PC-9 (cell line): ENCODE measurements at regions of chr5 and their contacts with region 1.

Region 1: DNA sequence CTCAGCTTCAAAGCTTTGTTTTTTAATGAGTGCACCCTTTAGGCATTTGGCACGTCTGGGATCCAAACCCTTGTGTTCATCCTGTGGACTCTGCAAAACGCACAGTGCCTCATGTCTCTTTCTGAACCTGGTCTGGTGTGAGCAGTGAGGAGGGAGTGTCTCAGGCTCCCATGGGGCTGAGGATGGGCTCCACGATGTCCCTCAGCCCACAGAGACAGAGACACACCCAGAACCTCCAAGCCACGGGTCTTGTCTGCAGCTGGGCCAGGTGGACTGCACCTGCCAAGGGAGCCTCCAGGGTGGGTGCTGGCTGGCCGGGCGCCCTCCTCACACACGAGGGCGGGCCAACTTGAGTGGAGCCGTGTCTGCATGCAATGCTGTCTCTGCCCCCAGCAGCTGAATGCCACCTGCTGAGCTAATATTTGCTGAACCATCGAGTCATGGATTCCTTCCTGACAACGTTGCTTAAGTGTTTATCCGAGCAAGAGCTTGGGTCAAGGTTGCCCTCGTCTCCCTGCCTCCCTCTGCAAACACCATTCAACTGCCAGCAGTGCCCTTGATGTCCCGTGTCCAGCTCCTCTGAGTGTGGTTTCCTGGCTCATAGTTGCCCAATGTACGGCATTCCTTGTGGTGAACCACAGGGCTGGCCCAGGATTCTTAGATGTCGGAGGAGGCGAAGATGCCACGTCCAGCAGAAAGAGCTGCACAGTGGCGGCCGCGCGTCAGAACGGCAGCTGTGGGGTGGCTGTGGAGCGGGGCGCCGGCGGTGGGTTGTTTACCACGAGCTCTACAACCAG is 31.4 kb upstream of the LPCAT1 start:
- DNase-seq: peak; percentile 100
- H3K4me3 ChIP-seq: peak overlapping the region; percentile 5; the same call in 1 of the 2 replicates
- H3K27ac ChIP-seq: peak overlapping the region; percentile 9
- H3K4me1 ChIP-seq: peaks cover 26% of the 10 kb centered on the region
- H3K27me3 ChIP-seq: peaks cover 25% of the 10 kb centered on the region
- CTCF ChIP-seq: 0 out of 2 replicates have a peak, but pooled peaks have one; percentile 10

Region 2: GRCh38 chr5:386432-387341 is 1168.5 kb before region 1 on chr5:
- CTCF ChIA-PET with region 1: no interaction called
- POLR2A ChIA-PET with region 1: no interaction called
- intact Hi-C with region 1: loop called (anchors 1 kb)
- DNase-seq: peak; percentile 87 to 96
- H3K4me3 ChIP-seq: no peak overlapping the region
- H3K27ac ChIP-seq: no peak overlapping the region
- H3K4me1 ChIP-seq: peaks cover 26% of the 10 kb centered on the region
- H3K27me3 ChIP-seq: no peaks in the 10 kb centered on the region
- CTCF ChIP-seq: no peak

Region 3: DNA sequence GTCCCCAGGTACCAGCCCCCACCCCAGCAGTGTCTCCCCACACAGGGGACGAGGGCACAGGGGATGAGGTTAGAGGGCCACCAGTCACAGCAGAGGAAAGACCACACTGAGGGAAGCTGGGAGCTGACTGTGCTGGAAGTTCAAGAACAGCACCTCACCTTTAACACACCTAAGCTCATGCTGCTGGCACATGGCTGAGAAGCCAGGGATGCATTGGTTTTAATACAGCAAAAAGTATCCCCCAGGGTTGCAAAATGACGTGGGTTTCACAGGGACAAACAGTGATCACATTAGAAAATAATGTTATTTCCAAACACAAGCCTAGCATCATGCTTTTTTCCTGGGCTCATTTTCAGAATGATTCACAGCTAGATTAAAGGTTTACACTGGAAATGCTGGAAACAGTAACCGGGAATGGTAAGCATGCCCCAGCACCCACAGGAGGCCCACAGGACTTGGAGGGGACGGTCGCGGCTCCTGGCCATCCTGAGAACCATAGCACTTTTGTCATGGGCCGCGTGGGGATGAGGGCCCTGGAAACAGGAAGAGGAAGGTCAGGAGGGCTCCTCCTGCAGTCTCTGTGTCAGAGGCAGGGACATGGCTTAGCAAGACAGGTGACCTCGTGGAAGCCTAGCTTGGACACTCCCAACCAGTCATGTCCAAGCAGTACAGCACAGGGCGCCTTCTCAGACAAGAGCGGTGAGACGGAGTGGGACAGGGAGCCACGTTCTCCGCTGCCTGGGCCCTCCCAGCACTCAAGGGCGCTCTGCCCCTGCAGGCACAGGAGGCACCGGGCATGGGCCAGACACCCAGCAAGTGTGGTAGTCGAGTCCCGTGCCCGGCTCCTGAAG is 38.2 kb before region 1 on chr5:
- CTCF ChIA-PET with region 1: interaction called, 6 read pairs
- POLR2A ChIA-PET with region 1: interaction called, 3 read pairs
- intact Hi-C with region 1: loop called (anchors 1 kb)
- DNase-seq: peak; percentile 38 to 86
- H3K4me3 ChIP-seq: peak overlapping the region; percentile 3; the same call in 1 of the 2 replicates
- H3K27ac ChIP-seq: peak overlapping the region; percentile 85
- H3K4me1 ChIP-seq: peaks cover 66% of the 10 kb centered on the region
- H3K27me3 ChIP-seq: no peaks in the 10 kb centered on the region
- CTCF ChIP-seq: no peak

Region 4: GRCh38 chr5:1522908-1523770 is 32.1 kb before region 1 on chr5:
- CTCF ChIA-PET with region 1: no interaction called
- POLR2A ChIA-PET with region 1: no interaction called
- intact Hi-C with region 1: loop called (anchors 1 kb)
- DNase-seq: peak in 1 of 2 experiments; percentile 45
- H3K4me3 ChIP-seq: peak overlapping the region; percentile 52
- H3K27ac ChIP-seq: no peak overlapping the region
- H3K4me1 ChIP-seq: peaks cover 19% of the 10 kb centered on the region
- H3K27me3 ChIP-seq: no peaks in the 10 kb centered on the region
- CTCF ChIP-seq: no peak

Region 5: DNA sequence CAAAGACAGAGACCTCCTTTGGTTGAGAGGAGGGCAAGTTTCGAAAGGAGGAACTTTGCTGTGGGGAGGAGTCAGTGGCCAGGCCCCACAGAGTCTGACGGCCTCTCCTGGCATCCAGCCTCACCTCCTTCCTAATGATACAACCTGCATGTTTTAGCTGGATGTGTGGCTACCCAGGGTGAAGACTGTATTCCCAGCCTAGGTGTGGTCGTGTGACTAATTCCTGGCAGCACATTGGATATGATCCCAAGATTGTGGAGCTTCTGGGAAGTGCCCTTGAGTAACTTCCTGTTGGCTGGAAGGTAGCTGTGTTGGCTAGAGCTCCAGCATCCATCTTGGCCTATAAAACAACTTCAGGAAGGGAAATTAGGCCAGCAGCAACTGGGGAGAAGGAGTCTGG is 12.5 kb before region 1 on chr5:
- CTCF ChIA-PET with region 1: no interaction called
- POLR2A ChIA-PET with region 1: interaction called, 7 read pairs
- intact Hi-C with region 1: loop called (anchors 1 kb)
- DNase-seq: peak; percentile 83 to 94
- H3K4me3 ChIP-seq: no peak overlapping the region
- H3K27ac ChIP-seq: no peak overlapping the region
- H3K4me1 ChIP-seq: peaks cover 32% of the 10 kb centered on the region
- H3K27me3 ChIP-seq: no peaks in the 10 kb centered on the region
- CTCF ChIP-seq: no peak

Region 6: GRCh38 chr5:1568201-1568979 is 13.2 kb after region 1 on chr5:
- CTCF ChIA-PET with region 1: no interaction called
- POLR2A ChIA-PET with region 1: interaction called, 25 read pairs
- intact Hi-C with region 1: loop called (anchors 1 kb)
- DNase-seq: peak; percentile 88 to 100
- H3K4me3 ChIP-seq: peak overlapping the region; percentile 16; the same call in 1 of the 2 replicates
- H3K27ac ChIP-seq: peak overlapping the region; percentile 76
- H3K4me1 ChIP-seq: peaks cover 61% of the 10 kb centered on the region
- H3K27me3 ChIP-seq: no peaks in the 10 kb centered on the region
- CTCF ChIP-seq: no peak

Region 7: DNA sequence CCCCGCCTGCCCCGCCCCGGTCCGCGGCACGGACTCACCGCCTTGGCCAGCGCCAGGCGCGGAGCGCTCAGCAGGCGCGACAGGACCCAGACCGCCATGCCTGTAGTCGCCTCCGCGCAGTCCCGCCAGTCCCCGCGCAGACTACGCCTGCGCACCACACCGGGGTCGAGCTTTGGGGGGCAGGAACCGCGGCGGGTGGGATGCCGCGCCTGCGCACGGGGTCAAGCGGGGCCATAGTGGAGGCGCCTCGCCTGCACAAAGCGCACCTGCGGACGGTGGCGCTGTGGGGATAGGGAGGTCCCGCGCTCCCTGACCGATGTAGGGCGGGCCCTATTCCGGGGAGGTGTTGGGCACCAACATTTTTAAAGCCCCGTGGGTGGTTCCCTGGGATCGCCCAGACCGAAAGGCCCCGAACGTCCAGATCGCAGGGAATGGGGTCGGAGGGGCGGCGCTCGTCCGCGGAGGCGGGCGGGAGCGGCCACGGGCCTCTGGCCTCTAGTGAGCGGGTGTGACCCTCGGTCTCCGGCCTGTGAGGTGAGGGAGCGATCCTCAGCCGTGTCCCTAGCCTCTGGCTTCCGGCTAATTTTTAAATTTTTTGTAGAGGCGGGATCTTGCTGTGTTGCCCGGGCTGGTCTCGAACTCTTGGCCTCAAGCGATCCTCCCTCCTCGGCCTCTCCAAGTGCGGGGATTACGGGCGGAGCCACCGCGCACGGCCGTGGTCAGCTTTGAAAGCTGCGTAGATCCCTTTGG is 39.3 kb after region 1 on chr5:
- CTCF ChIA-PET with region 1: no interaction called
- POLR2A ChIA-PET with region 1: no interaction called
- intact Hi-C with region 1: loop called (anchors 2 kb)
- DNase-seq: peak in 1 of 2 experiments; percentile 85
- H3K4me3 ChIP-seq: no peak overlapping the region
- H3K27ac ChIP-seq: no peak overlapping the region
- H3K4me1 ChIP-seq: peaks cover 5% of the 10 kb centered on the region; the same call in 1 of the 2 replicates
- H3K27me3 ChIP-seq: no peaks in the 10 kb centered on the region
- CTCF ChIP-seq: no peak